ENCODE measurements at regions of chr1 and their contacts with region 1.

Region 1: GRCh38 chr1:28208818-28209441 is 23.9 kb downstream of the DNAJC8 start:
- DNase-seq: no peak

Region 2: DNA sequence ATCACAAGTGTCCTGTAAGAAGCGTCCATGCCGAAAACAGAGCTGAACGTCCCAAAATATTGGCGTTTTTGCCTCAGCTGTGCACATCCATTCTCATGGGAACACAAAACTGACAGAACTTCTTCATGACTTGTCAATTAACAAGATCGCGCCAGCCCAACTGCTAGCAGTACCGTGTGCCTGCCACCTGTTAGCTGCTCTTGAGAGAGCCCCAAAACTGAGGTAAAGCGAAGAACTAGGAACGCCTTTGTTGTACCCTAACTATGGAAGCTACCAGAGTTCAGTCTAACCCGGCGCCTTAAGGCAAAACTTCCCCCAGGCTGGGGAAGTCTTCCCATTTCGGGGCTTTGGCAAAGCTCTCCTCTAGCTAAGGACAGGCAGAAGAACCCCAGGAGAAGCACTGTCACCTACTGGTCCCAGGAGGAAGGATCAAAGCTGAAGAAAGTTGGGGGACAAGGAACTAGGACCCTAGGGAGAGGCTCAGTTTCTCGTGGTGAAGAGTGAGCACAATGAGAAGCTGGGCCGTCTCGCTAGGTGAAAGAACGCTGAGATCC is 121.2 kb before region 1 on chr1:
- intact Hi-C with region 1: no loop called
- DNase-seq: no peak

Region 3: GRCh38 chr1:28104866-28105467 is 104.0 kb before region 1 on chr1:
- intact Hi-C with region 1: loop called in 1 of 2 experiments (anchors 10 kb)
- DNase-seq: no peak

Region 4: DNA sequence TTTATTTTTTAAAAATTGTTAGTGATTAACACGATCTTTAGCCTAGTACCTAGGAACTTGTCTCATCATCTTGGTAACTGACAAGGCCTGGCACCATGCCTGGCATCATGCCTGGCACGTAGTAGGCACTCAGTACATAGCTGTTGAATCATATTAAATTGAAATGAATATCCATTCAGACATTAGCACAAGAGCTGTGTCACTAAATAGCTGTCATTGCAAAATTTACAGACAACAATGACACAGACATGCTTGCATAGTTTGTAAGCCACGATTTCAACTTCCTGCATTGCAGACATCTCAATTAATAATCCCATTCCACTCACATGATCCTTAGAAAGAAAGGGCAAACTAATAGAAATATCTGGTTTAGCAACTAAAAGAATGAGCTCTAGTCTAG is 145.2 kb after region 1 on chr1:
- intact Hi-C with region 1: no loop called
- DNase-seq: peak; percentile 47

Measured in posterior vena cava (tissue), 2 donors.